ENCODE measurements at regions of chr12 and their contacts with region 1.

Region 1: GRCh38 chr12:71746983-71747611 is 7.6 kb upstream of the RAB21 start:
- DNase-seq: no peak
- H3K4me3 ChIP-seq: no peak overlapping the region
- H3K27ac ChIP-seq: no peak overlapping the region
- H3K4me1 ChIP-seq: peaks cover 0 to 10% (median 0%) of the 10 kb centered on the region in 4 experiments; a peak in 2 of 7 replicates
- H3K27me3 ChIP-seq: no peaks in the 10 kb centered on the region
- CTCF ChIP-seq: peak in 2 of 3 experiments; percentile 75 to 76; a peak in 3 of 4 replicates
- EP300 ChIP-seq: no peak
- POLR2A ChIP-seq: no peak
- RAD21 ChIP-seq: peak; percentile 88 to 89

Region 2: DNA sequence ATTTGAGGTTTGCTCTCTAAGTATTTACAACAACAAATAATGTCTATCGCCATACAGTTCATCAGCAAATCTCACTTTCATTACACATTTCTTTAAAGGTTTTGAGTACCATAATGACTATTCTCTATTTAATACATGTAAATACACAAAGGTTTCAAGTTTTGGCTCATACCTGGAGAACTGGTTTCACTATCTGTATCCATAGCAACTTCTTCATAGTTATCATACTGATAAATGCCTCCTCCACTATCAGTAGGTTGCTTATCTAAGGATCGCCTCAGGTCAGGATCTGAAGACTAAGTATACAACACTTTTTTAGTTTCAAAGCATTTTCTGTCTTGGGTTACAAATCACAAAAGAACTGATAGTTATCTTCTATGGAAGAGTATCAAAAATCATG is 104.8 kb before region 1 on chr12:
- CTCF ChIA-PET with region 1: interaction called, 24 read pairs
- POLR2A ChIA-PET with region 1: no interaction called
- DNase-seq: no peak
- H3K4me3 ChIP-seq: no peak overlapping the region
- H3K27ac ChIP-seq: no peak overlapping the region
- H3K4me1 ChIP-seq: no peaks in the 10 kb centered on the region
- H3K27me3 ChIP-seq: no peaks in the 10 kb centered on the region
- CTCF ChIP-seq: no peak
- EP300 ChIP-seq: no peak
- POLR2A ChIP-seq: no peak
- RAD21 ChIP-seq: no peak

Region 3: DNA sequence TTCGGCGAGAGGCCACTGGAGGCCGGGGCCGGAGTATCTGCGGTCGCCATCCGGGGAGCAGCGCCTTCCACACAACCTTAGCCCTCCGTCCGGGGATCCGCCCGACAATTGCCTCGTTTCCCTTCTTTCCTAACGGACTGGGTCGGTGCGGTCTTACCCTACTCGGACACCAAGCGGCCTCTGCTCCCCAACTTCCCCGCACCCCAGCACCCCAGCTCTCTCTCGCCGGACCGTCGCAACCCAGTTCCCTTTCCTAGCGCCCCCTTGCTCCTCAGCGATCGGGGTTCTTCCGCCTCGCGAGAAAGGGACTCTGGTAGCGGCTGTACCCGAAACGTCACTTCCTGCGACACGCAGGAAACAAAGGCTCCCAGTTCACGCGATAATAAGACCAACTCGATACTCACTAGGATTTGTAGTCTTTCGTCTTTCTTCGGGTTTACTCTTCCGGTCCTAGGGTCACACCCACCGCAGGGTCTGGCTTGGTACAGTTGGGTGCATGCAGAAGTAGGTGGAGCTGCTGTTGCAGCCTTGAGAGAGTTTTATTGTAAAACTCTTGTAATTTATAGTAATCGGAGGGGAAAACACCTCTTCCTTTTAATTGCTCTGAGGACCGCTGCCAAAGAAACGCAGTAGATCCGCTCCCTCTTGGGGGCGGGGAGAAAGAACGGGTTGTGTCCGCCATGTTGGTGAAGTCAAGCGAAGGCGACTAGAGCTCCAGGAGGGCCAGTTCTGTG is 83.4 kb before region 1 on chr12 and contains the start of gene ZFC3H1:
- CTCF ChIA-PET with region 1: interaction called, 20 read pairs
- POLR2A ChIA-PET with region 1: interaction called, 9 read pairs
- DNase-seq: peak; percentile 79 to 87
- H3K4me3 ChIP-seq: peak within 1 kb of the TSS; percentile 84 to 98 (median 94)
- H3K27ac ChIP-seq: peak within 1 kb of the TSS; percentile 98
- H3K4me1 ChIP-seq: no peaks in the 10 kb centered on the region; a peak in 1 of 7 replicates
- H3K27me3 ChIP-seq: no peaks in the 10 kb centered on the region
- CTCF ChIP-seq: peak in 1 of 3 experiments; percentile 27; a peak in 1 of 4 replicates
- EP300 ChIP-seq: no peak
- POLR2A ChIP-seq: peak; percentile 3 to 83
- RAD21 ChIP-seq: no peak
- total RNA-seq, gene ZFC3H1: 29.7 and 32.4 TPM in 2 replicates

Region 4: DNA sequence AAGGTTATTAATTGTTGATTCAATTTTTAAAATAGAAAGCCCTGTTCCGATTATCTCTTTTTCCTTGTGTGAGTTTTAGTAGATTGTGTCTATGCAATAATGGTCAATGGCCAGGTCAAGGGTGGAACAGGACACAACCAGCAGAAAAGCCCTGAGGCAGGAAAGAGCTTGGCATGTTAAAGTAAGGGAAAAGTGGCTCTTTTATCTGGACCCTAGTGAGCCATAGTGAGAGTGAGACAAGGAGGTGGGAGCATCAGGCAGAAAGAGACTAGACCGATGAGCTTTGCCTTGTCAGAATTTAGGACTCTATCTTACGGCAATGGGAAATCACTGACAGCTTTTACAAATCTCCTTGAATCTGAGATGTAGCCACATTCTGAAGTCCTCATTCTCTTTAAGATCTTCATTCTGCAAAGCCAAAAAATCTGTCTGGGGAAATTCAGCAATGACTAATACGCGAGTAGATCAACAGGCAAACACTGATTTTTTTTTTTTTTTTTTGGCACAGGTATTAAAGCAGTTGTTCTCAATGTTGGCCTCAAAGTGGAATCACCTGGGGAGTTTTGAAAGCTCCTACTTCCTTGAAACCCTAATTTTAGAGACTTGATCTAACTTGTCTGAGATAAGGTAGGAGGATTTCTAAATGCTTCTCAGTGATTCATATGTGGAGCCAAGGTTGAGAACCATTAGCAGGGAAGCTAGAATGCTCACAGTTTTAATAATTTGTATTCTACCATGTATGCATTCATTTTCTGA is 27.3 kb before region 1 on chr12:
- CTCF ChIA-PET with region 1: interaction called, 24 read pairs
- POLR2A ChIA-PET with region 1: interaction called, 3 read pairs
- DNase-seq: no peak
- H3K4me3 ChIP-seq: no peak overlapping the region
- H3K27ac ChIP-seq: no peak overlapping the region
- H3K4me1 ChIP-seq: no peaks in the 10 kb centered on the region
- H3K27me3 ChIP-seq: no peaks in the 10 kb centered on the region
- CTCF ChIP-seq: no peak
- EP300 ChIP-seq: no peak
- POLR2A ChIP-seq: no peak
- RAD21 ChIP-seq: no peak

Region 5: GRCh38 chr12:71731751-71732712 is 15.1 kb before region 1 on chr12:
- CTCF ChIA-PET with region 1: interaction called, 97 read pairs
- POLR2A ChIA-PET with region 1: interaction called, 4 read pairs
- DNase-seq: peak in 1 of 2 experiments; percentile 61
- H3K4me3 ChIP-seq: no peak overlapping the region
- H3K27ac ChIP-seq: no peak overlapping the region
- H3K4me1 ChIP-seq: no peaks in the 10 kb centered on the region; a peak in 1 of 7 replicates
- H3K27me3 ChIP-seq: no peaks in the 10 kb centered on the region
- CTCF ChIP-seq: peak in 2 of 3 experiments; percentile 38 to 47; a peak in 3 of 4 replicates
- EP300 ChIP-seq: no peak
- POLR2A ChIP-seq: no peak
- RAD21 ChIP-seq: no peak; a peak in 1 of 4 replicates

Region 6: GRCh38 chr12:71780237-71780822 is 33.2 kb after region 1 on chr12:
- CTCF ChIA-PET with region 1: interaction called, 12 read pairs
- POLR2A ChIA-PET with region 1: no interaction called
- DNase-seq: no peak
- H3K4me3 ChIP-seq: no peak overlapping the region
- H3K27ac ChIP-seq: no peak overlapping the region
- H3K4me1 ChIP-seq: no peaks in the 10 kb centered on the region
- H3K27me3 ChIP-seq: no peaks in the 10 kb centered on the region
- CTCF ChIP-seq: peak in 2 of 3 experiments; percentile 58 to 65; a peak in 3 of 4 replicates
- EP300 ChIP-seq: no peak
- POLR2A ChIP-seq: no peak
- RAD21 ChIP-seq: peak; percentile 61 to 70